SK-N-SH (cell line): ENCODE measurements at regions of chr19 and their contacts with region 1.

Region 1: GRCh38 chr19:4851551-4852290 is 15.7 kb downstream of the PLIN3 start:
- DNase-seq: peak; percentile 94
- H3K4me3 ChIP-seq: peak overlapping the region in 1 of 2 experiments; percentile 41; a peak in 1 of 4 replicates
- H3K27ac ChIP-seq: no peak overlapping the region
- H3K4me1 ChIP-seq: no peaks in the 10 kb centered on the region
- H3K27me3 ChIP-seq: no peaks in the 10 kb centered on the region
- CTCF ChIP-seq: peak; percentile 91
- EP300 ChIP-seq: no peak
- RAD21 ChIP-seq: peak; percentile 76

Region 2: GRCh38 chr19:4524808-4525562 is 326.7 kb before region 1 on chr19:
- CTCF ChIA-PET with region 1: no interaction called
- POLR2A ChIA-PET with region 1: no interaction called
- DNase-seq: peak; percentile 79
- H3K4me3 ChIP-seq: no peak overlapping the region
- H3K27ac ChIP-seq: no peak overlapping the region
- H3K4me1 ChIP-seq: no peaks in the 10 kb centered on the region
- H3K27me3 ChIP-seq: no peaks in the 10 kb centered on the region
- CTCF ChIP-seq: peak; percentile 67
- EP300 ChIP-seq: no peak
- RAD21 ChIP-seq: peak; percentile 38

Region 3: DNA sequence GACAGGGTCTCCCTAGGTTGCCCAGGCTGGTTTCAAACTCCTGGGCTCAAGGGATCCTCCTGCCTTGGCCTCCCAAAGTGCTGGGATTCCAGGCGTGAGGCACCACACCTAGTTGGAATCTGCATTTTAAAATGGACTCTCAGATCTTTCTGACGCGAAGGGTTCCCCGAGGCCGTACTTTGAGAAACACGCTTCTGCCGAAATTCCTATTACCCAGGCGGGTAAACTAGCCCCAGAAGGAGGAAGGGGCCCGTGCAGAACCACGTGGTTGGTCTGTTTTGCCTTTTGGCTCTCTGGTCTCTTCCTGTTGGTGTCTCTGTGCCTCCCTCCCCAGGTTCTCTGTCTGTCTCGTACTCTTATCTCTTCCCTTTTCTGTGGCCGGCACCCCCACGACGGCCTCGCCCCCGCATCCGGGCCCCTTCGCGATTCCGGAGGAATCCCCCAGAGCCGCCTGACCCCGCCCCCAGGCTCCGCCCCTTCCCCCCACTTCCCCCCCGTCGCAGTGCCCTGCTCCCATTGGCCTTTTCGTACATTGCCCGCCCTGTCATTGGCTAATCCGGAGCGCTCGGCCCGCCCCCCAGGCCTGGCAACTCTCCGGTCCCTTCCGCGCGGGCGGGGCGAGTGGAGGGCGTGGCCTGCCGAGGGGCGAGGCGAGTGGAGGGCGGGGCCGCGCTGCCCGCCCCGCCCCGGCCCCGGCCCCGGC is 212.7 kb before region 1 on chr19 and contains the start of gene TNFAIP8L1:
- CTCF ChIA-PET with region 1: no interaction called
- POLR2A ChIA-PET with region 1: no interaction called
- DNase-seq: peak; percentile 100
- H3K4me3 ChIP-seq: peak within 1 kb of the TSS; percentile 72 to 89
- H3K27ac ChIP-seq: peak within 1 kb of the TSS; percentile 54 to 62; a peak in 3 of 4 replicates
- H3K4me1 ChIP-seq: peaks cover 3 to 20% of the 10 kb centered on the region in 2 experiments; a peak in 1 of 4 replicates
- H3K27me3 ChIP-seq: no peaks in the 10 kb centered on the region
- CTCF ChIP-seq: no peak
- EP300 ChIP-seq: no peak
- RAD21 ChIP-seq: no peak
- polyA plus RNA-seq, gene TNFAIP8L1: 5.7 and 6.4 TPM in 2 replicates

Region 4: DNA sequence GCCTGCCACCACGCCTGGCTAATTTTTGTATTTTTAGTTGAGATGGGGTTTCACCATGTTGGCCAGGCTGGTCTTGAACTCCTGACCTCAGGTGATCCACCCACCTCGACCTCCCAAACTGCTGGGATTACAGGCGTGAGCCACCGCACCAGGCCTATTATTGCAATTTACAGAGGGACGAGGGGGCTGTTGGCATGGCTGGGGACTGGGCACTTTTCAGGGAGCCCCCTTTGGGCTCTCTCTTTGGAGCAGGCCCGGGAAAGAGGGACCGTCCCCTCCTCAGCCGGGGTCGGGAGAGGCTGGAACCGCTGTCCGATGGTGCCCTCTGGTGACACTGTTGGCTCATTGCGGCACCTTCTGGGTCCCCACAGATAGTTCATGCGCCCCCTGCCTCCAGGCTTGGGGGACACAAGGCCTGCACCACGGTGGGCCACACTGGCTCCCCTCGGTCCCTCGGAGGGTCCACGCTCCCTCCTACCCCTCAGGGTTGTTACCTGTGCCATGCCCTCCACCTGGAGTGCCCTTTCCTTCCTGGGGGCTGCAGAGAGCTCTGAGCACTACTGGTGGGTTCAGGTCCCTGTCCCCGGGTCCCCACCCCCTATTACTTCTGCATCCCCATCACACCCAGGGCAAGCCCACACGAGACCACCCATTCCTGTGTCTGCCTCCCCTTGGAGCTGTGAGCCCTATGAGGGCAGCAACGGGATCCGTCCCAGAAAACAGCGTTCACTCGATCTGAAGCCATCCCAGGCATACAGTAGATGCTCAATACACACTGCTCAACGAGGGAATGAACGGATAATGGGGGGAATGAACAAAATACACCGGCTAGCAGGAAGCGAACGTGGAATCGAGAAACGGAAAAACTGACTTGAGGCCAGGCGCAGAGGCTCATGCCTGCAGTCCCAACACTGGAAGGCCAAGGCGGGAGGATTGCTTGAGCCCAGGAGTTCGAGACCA is 47.7 kb before region 1 on chr19:
- CTCF ChIA-PET with region 1: interaction called, 409 read pairs
- POLR2A ChIA-PET with region 1: interaction called, 14 read pairs
- DNase-seq: peak; percentile 90
- H3K4me3 ChIP-seq: peak overlapping the region in 1 of 2 experiments; percentile 23; a peak in 1 of 4 replicates
- H3K27ac ChIP-seq: no peak overlapping the region
- H3K4me1 ChIP-seq: no peaks in the 10 kb centered on the region
- H3K27me3 ChIP-seq: no peaks in the 10 kb centered on the region
- CTCF ChIP-seq: peak; percentile 77
- EP300 ChIP-seq: no peak
- RAD21 ChIP-seq: peak; percentile 82

Region 5: DNA sequence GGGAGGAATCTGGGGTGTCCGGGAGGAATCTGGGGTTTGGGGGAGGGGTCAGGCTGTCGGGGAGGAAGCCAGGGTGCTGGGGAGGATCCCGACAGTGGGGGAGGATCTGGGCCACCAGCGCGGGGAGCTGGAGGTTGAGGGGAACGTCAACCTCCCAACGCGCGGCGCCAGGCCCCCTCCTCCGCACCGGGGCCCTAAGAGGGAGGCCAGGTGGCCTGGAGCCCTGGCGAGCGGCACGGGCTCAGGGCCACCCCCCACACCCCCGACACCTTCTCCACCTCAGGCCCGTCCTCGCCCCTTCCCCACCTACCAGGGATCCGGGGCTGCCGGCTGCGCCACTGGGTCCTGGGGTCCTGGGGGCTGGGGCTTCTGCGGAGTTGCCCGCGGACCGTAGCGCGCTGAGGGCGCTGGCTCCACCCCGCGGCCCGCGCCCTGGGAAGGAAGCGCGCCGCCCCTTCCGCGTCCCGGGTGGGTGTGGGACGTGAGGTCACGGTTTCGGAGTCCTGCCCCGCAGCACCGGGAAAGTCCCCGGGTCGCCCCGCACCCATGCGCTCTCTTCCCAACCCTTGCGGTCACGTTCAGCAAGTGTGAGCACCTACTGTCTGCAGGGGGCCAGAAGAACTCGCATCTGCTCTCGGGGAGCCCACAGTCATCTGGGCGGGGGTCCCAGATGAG is 20.3 kb before region 1 on chr19 and contains the start of gene TICAM1:
- CTCF ChIA-PET with region 1: interaction called, 47 read pairs
- POLR2A ChIA-PET with region 1: interaction called, 3 read pairs
- DNase-seq: peak; percentile 88
- H3K4me3 ChIP-seq: peak within 1 kb of the TSS; percentile 67 to 91
- H3K27ac ChIP-seq: peak within 1 kb of the TSS; percentile 43 to 45; a peak in 3 of 4 replicates
- H3K4me1 ChIP-seq: peaks cover 5% of the 10 kb centered on the region in 2 experiments; a peak in 1 of 4 replicates
- H3K27me3 ChIP-seq: no peaks in the 10 kb centered on the region
- CTCF ChIP-seq: no peak; the same call in 1 of the 2 replicates
- EP300 ChIP-seq: no peak
- RAD21 ChIP-seq: no peak
- polyA plus RNA-seq, gene TICAM1: 1.8 and 2.7 TPM in 2 replicates

Region 6: GRCh38 chr19:4841366-4841704 is 10.4 kb before region 1 on chr19:
- CTCF ChIA-PET with region 1: interaction called, 21 read pairs
- POLR2A ChIA-PET with region 1: no interaction called
- DNase-seq: no peak
- H3K4me3 ChIP-seq: no peak overlapping the region
- H3K27ac ChIP-seq: no peak overlapping the region
- H3K4me1 ChIP-seq: no peaks in the 10 kb centered on the region
- H3K27me3 ChIP-seq: no peaks in the 10 kb centered on the region
- CTCF ChIP-seq: no peak
- EP300 ChIP-seq: no peak
- RAD21 ChIP-seq: no peak

Region 7: DNA sequence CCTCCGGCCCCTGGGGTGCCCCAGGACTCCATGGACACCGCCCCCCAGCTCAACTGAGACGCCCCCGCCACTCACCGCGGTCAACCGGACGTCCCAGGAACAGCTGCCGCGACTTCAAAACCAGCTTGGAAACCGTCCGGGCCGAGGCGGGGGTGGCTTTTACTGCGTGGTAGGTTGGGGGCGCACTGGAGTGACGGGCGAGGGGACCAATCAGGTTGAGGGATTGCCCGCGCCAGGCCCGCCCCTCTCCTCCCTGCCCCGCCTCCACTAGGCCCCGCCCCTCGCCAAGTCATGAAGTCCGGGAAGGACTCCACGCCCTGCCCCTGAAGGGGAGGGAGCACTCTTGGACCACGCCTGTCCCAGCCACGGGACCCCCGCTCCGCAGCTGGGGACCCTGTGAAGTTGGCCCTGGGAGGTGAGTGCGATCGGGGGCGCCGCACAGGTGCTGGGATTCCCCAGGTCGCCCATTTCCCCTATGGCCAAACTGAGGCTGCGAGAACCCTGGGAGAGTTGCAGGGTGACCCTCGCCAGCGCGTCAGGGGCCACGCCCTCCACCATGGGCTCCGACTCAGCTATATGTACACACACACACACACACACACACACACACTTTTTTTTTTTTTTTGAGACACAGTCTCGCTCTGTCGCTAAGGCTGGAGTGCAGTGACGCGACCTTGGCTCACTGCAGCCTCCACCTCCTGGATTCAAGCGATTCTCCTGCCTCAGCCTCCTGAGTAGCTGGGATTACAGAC is 16.0 kb after region 1 on chr19 and contains the start of gene PLIN3:
- CTCF ChIA-PET with region 1: interaction called, 39 read pairs
- POLR2A ChIA-PET with region 1: interaction called, 6 read pairs
- DNase-seq: peak; percentile 100
- H3K4me3 ChIP-seq: peak within 1 kb of the TSS; percentile 60 to 97
- H3K27ac ChIP-seq: peak within 1 kb of the TSS; percentile 55 to 84; a peak in 3 of 4 replicates
- H3K4me1 ChIP-seq: peaks cover 6 to 7% of the 10 kb centered on the region in 2 experiments; a peak in 1 of 4 replicates
- H3K27me3 ChIP-seq: no peaks in the 10 kb centered on the region
- CTCF ChIP-seq: no peak
- EP300 ChIP-seq: no peak
- RAD21 ChIP-seq: no peak
- polyA plus RNA-seq, gene PLIN3: 129 and 136 TPM in 2 replicates

Region 8: GRCh38 chr19:4909897-4910593 is 58.3 kb after region 1 on chr19:
- CTCF ChIA-PET with region 1: interaction called, 11 read pairs
- POLR2A ChIA-PET with region 1: no interaction called
- DNase-seq: peak; percentile 99
- H3K4me3 ChIP-seq: peak overlapping the region; percentile 62 to 82
- H3K27ac ChIP-seq: peak overlapping the region; percentile 81 to 84
- H3K4me1 ChIP-seq: peaks cover 27 to 31% of the 10 kb centered on the region in 2 experiments; a peak in 3 of 4 replicates
- H3K27me3 ChIP-seq: no peaks in the 10 kb centered on the region
- CTCF ChIP-seq: no peak
- EP300 ChIP-seq: no peak
- RAD21 ChIP-seq: no peak

Region 9: GRCh38 chr19:4951656-4952055 is 99.9 kb after region 1 on chr19:
- CTCF ChIA-PET with region 1: no interaction called
- POLR2A ChIA-PET with region 1: no interaction called
- DNase-seq: no peak
- H3K4me3 ChIP-seq: no peak overlapping the region
- H3K27ac ChIP-seq: no peak overlapping the region
- H3K4me1 ChIP-seq: no peaks in the 10 kb centered on the region
- H3K27me3 ChIP-seq: no peaks in the 10 kb centered on the region
- CTCF ChIP-seq: no peak
- EP300 ChIP-seq: no peak
- RAD21 ChIP-seq: no peak